Adrenal gland (tissue), 19 donors: ENCODE measurements at regions of chr2 and their contacts with region 1.

Region 1: GRCh38 chr2:101012706-101013181 is 10.7 kb downstream of the RPL31 start:
- DNase-seq: peak in 6 of 7 donors; percentile 27 to 65 (median 42)
- H3K4me3 ChIP-seq: no peak overlapping the region
- H3K27ac ChIP-seq: no peak overlapping the region
- H3K4me1 ChIP-seq: no peaks in the 10 kb centered on the region
- H3K27me3 ChIP-seq: no peaks in the 10 kb centered on the region
- CTCF ChIP-seq: peak; percentile 78 to 91 (median 85)
- POLR2A ChIP-seq: no peak

Region 2: GRCh38 chr2:100902833-100903405 is 109.8 kb before region 1 on chr2:
- intact Hi-C with region 1: no loop called
- DNase-seq: peak in 5 of 7 donors; percentile 50 to 62 (median 53)
- H3K4me3 ChIP-seq: no peak overlapping the region
- H3K27ac ChIP-seq: peak overlapping the region in 1 of 5 donors; percentile 55
- H3K4me1 ChIP-seq: peaks cover 5 to 10% of the 10 kb centered on the region in 2 donors
- H3K27me3 ChIP-seq: no peaks in the 10 kb centered on the region
- CTCF ChIP-seq: peak in 1 of 6 experiments; percentile 7
- POLR2A ChIP-seq: no peak

Region 3: GRCh38 chr2:101204400-101205115 is 191.8 kb after region 1 on chr2:
- intact Hi-C with region 1: loop called in 1 of 2 experiments (anchors 5 kb)
- DNase-seq: no peak
- H3K4me3 ChIP-seq: no peak overlapping the region
- H3K27ac ChIP-seq: no peak overlapping the region
- H3K4me1 ChIP-seq: peaks cover 6 to 7% of the 10 kb centered on the region in 2 donors
- H3K27me3 ChIP-seq: no peaks in the 10 kb centered on the region
- CTCF ChIP-seq: peak in 2 of 6 experiments; percentile 11
- POLR2A ChIP-seq: no peak